ENCODE measurements at regions of chr15 and their contacts with region 1.

Region 1: DNA sequence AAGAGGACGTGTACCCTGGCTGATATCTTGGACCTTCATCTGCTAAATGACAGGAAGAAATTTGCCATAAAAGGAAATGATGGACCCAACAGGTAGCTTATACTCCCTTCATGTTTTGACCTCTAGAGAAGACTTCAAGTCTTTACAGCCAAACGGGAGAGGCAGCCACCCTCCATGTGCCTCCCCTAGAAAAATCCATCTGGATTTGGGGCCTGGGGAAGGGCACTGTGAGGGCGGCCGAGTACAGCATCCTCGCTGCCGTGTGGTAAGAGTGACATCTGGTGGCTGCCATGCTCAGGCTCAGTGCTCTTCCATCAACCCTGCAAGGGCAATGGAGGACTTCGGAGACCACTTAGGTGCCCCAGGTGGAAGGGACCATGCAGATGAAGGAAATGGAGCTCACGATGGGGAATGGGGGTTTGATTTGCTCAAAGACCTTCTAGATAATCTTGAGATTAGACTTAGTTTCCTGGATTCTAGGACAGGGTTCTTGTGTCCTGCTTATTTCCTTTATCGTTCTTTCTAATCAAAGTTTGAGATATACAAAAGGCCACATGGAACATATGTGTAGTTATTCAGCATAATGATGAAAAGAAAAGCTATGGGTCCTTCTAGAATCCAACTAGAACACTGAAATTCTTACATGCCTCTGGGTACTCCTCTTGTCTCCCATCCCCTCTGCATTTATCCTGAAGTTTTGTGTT is 44.4 kb downstream of the AQP9 start:
- DNase-seq: peak in 6 of 9 experiments; percentile 3 to 43 (median 16)
- ATAC-seq: no peak
- H3K4me3 ChIP-seq: no peak overlapping the region
- H3K4me3 Mint-ChIP-seq: no peak overlapping the region
- H3K27ac ChIP-seq: no peak overlapping the region
- H3K27ac Mint-ChIP-seq: no peak overlapping the region
- H3K4me1 ChIP-seq: no peaks in the 10 kb centered on the region
- H3K4me1 Mint-ChIP-seq: peaks cover 11% of the 10 kb centered on the region
- H3K27me3 ChIP-seq: peaks cover 4% of the 10 kb centered on the region in 2 experiments
- H3K27me3 Mint-ChIP-seq: peaks cover 29% of the 10 kb centered on the region
- CTCF ChIP-seq: peak; percentile 17

Region 2: DNA sequence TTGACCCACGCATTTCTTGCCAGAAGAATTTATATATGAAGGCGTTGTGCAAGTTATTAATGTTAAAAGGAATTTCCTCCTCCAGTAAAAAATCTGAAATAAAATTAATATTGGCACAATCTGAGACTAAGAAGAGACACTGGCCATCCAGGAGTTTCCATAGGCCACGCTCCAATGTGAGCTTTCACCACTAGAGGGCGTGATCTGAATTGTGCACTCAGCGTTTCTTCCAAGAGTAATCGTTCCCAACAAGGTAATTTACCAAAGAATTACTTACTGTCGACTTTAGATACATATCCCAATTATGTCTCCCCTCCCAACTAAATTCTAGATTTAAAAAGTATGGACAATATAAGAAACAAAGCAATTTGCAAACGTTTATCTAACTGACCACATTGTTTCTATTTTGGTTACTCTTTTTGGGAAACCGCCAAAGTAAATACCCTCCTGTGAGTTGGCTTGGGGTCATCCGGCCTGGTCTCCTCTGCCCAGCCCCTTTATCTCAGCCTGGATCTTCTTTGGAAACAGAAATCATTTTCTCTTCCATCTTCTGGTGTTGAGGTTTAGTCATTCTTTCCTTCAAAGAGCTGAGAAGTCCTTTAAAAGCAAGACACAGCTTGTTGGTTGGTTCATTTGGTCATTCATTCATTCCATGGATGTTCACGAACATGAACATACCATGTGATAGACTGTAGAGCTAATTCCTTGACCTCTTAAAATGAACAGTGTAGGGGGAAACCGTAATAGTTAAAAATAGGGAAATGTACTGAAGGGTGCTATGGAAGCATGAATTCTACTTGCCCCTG is 449.9 kb before region 1 on chr15:
- CTCF ChIA-PET with region 1: no interaction called
- POLR2A ChIA-PET with region 1: no interaction called
- intact Hi-C with region 1: loop called in 1 of 2 experiments (anchors 5 kb)
- DNase-seq: peak in 8 of 9 experiments; percentile 17 to 61 (median 50)
- ATAC-seq: no peak
- H3K4me3 ChIP-seq: no peak overlapping the region
- H3K4me3 Mint-ChIP-seq: no peak overlapping the region
- H3K27ac ChIP-seq: no peak overlapping the region
- H3K27ac Mint-ChIP-seq: no peak overlapping the region
- H3K4me1 ChIP-seq: no peaks in the 10 kb centered on the region
- H3K4me1 Mint-ChIP-seq: peaks cover 8% of the 10 kb centered on the region
- H3K27me3 ChIP-seq: no peaks in the 10 kb centered on the region
- H3K27me3 Mint-ChIP-seq: no peaks in the 10 kb centered on the region
- CTCF ChIP-seq: peak; percentile 92

Region 3: DNA sequence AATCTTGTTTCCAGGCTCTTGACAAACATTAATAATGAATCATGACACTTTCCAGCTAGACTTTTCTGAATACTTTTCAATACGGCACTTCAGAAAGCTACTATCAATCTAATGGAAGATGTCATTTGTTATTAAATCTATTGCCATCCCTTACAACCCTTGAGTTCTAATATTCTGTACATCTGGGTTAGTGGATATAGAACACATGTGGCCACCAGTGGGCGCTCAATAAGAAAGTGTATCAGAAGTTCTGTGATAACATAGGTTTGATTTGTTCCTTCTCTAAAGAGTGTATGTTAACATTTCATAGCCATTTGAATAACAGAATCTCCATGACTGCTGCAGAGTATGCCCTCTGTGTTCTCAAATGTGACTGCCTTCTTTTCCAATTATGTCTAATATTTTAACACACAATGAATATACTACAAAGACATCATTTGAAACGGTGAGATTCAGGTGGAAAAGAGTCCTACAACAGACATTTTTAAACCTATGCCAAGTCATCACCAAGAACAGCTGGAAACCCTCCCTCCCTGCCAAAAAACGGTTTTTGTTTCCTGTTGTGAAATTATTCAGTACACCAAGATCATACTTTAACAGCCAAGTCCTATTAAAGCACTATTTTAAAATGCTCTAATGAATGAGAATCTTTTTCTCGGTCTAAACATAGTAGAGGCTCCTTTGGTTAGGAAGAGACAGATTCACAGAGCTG is 139.3 kb before region 1 on chr15:
- CTCF ChIA-PET with region 1: no interaction called
- POLR2A ChIA-PET with region 1: no interaction called
- intact Hi-C with region 1: loop called (anchors 5 kb)
- DNase-seq: peak in 7 of 9 experiments; percentile 8 to 50 (median 32)
- ATAC-seq: no peak
- H3K4me3 ChIP-seq: no peak overlapping the region
- H3K4me3 Mint-ChIP-seq: no peak overlapping the region
- H3K27ac ChIP-seq: no peak overlapping the region
- H3K27ac Mint-ChIP-seq: no peak overlapping the region
- H3K4me1 ChIP-seq: no peaks in the 10 kb centered on the region
- H3K4me1 Mint-ChIP-seq: no peaks in the 10 kb centered on the region
- H3K27me3 ChIP-seq: peaks cover 0 to 4% of the 10 kb centered on the region in 2 experiments
- H3K27me3 Mint-ChIP-seq: peaks cover 34% of the 10 kb centered on the region
- CTCF ChIP-seq: peak; percentile 64

Region 4: GRCh38 chr15:59819092-59819491 is 1636.5 kb after region 1 on chr15:
- CTCF ChIA-PET with region 1: no interaction called
- POLR2A ChIA-PET with region 1: no interaction called
- intact Hi-C with region 1: no loop called
- DNase-seq: no peak
- ATAC-seq: no peak
- H3K4me3 ChIP-seq: no peak overlapping the region
- H3K4me3 Mint-ChIP-seq: no peak overlapping the region
- H3K27ac ChIP-seq: no peak overlapping the region
- H3K27ac Mint-ChIP-seq: no peak overlapping the region
- H3K4me1 ChIP-seq: peaks cover 10% of the 10 kb centered on the region
- H3K4me1 Mint-ChIP-seq: peaks cover 15% of the 10 kb centered on the region
- H3K27me3 ChIP-seq: no peaks in the 10 kb centered on the region
- H3K27me3 Mint-ChIP-seq: peaks cover 3% of the 10 kb centered on the region
- CTCF ChIP-seq: no peak